ENCODE measurements at regions of chr5 and their contacts with region 1.

Region 1: GRCh38 chr5:147576646-147577535 is 67.0 kb upstream of the DPYSL3 start:
- DNase-seq: no peak
- H3K4me3 ChIP-seq: no peak overlapping the region
- H3K27ac ChIP-seq: no peak overlapping the region
- H3K27me3 ChIP-seq: peaks cover 2% of the 10 kb centered on the region
- CTCF ChIP-seq: peak; percentile 98

Region 2: GRCh38 chr5:146533260-146533857 is 1043.5 kb before region 1 on chr5:
- CTCF ChIA-PET with region 1: interaction called, 10 read pairs
- POLR2A ChIA-PET with region 1: no interaction called
- DNase-seq: peak; percentile 7
- H3K4me3 ChIP-seq: no peak overlapping the region
- H3K27ac ChIP-seq: no peak overlapping the region
- H3K27me3 ChIP-seq: no peaks in the 10 kb centered on the region
- CTCF ChIP-seq: peak; percentile 91

Region 3: GRCh38 chr5:147223948-147224791 is 352.7 kb before region 1 on chr5:
- CTCF ChIA-PET with region 1: interaction called, 169 read pairs
- POLR2A ChIA-PET with region 1: no interaction called
- DNase-seq: no peak
- H3K4me3 ChIP-seq: no peak overlapping the region
- H3K27ac ChIP-seq: no peak overlapping the region
- H3K27me3 ChIP-seq: peaks cover 2% of the 10 kb centered on the region
- CTCF ChIP-seq: peak; percentile 72

Region 4: DNA sequence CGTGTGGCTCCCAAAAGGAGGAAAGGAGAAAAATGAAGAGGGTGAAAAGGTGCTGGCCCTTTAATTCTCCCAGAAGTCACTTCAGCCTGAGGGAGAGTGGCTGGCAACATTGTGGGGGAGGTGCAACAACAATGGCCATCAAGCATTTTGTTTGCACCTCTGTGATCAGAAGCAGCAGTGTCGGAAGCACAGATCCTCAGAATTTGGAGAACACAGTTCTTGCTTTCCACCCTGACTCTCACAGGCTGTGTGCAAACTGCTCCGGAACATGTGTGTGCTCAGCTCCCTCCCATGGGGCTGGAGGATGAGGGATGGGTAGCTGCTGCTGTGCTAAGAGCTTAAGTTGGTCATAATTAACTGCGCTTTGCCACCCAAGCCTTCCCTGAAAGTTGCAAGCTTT is 194.1 kb before region 1 on chr5:
- CTCF ChIA-PET with region 1: interaction called, 81 read pairs
- POLR2A ChIA-PET with region 1: no interaction called
- DNase-seq: no peak
- H3K4me3 ChIP-seq: peak overlapping the region; percentile 33
- H3K27ac ChIP-seq: no peak overlapping the region
- H3K27me3 ChIP-seq: no peaks in the 10 kb centered on the region
- CTCF ChIP-seq: no peak

Region 5: DNA sequence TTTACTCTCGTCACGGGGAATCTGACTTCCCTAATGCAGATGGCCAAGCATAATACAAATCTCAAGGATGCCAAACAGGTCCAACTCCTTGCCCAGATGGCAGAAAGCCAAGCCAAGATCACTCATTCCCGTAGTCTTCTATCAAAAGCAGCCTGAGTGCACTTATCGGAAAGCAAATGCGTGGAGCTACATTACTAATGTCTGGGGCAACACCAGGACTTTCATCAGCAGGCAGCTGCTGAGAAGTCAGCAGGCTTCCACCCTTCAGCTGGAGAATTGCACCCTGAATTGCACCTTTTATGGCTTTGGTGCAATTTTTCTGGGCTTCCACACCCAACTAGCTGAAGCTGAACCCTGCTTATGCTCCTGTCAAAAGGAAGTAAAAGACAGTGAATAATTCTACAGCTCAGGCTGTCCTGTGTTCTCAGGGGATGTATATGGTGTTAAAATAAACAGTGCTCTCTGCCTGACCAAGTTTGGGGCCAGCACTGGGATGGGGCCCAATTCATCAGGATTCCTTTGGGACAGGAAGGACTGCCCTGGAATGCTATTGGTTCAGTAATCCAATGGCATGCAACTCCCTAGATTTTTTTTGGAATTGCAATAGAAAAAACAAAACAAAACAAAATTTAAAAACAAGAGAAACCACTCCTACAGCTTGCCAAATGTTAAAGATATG is 159.6 kb before region 1 on chr5:
- CTCF ChIA-PET with region 1: interaction called, 19 read pairs
- POLR2A ChIA-PET with region 1: no interaction called
- DNase-seq: no peak
- H3K4me3 ChIP-seq: no peak overlapping the region
- H3K27ac ChIP-seq: peak overlapping the region; percentile 71
- H3K27me3 ChIP-seq: no peaks in the 10 kb centered on the region
- CTCF ChIP-seq: no peak

Region 6: DNA sequence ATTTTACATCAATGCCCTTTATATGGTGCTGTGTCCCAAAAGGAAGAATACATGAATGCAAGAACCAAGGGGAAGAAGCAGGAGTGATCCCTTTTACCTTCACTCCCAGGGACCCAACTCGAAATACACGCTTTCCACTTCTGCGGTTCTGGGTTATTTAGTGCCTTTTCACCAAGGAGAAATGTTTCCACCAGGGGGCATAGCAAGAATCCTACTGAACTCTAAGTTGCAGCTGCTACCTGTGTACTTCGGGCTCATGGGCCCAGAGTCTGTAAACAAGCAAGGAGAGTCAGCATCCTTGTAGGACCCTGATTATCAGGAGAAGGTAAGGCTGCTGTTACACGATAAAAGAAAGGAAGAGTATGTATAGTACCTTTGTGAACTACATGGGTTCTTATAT is 112.7 kb before region 1 on chr5:
- CTCF ChIA-PET with region 1: interaction called, 43 read pairs
- POLR2A ChIA-PET with region 1: no interaction called
- DNase-seq: no peak
- H3K4me3 ChIP-seq: no peak overlapping the region
- H3K27ac ChIP-seq: no peak overlapping the region
- H3K27me3 ChIP-seq: no peaks in the 10 kb centered on the region
- CTCF ChIP-seq: peak; percentile 54

Region 7: DNA sequence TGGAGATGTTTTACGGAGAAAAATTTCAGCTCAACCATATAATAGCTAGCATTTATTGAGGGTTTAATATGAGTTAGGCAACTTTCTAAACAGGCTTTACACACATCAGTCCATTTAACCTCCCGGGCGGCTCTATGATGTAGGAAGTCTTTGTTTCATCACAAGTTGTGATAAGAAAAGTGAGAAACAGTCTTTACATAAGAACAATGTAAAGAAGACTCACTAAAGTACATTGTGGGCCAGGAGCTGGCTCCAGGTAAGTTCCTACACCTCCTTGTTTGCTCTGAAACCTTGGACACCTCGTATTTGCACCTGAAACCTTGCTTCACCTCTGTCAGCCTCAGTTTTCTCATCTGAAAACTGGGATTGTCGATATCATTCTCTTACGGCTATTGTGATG is 89.5 kb after region 1 on chr5:
- CTCF ChIA-PET with region 1: interaction called, 11 read pairs
- POLR2A ChIA-PET with region 1: no interaction called
- DNase-seq: no peak
- H3K4me3 ChIP-seq: no peak overlapping the region
- H3K27ac ChIP-seq: no peak overlapping the region
- H3K27me3 ChIP-seq: no peaks in the 10 kb centered on the region
- CTCF ChIP-seq: no peak

Region 8: GRCh38 chr5:149195337-149195887 is 1618.5 kb after region 1 on chr5:
- CTCF ChIA-PET with region 1: no interaction called
- POLR2A ChIA-PET with region 1: no interaction called
- DNase-seq: no peak
- H3K4me3 ChIP-seq: no peak overlapping the region
- H3K27ac ChIP-seq: no peak overlapping the region
- H3K27me3 ChIP-seq: no peaks in the 10 kb centered on the region
- CTCF ChIP-seq: no peak

Measured in AG04450 (cell line).